Activated T-helper 1 cell treated with anti-CD3 and anti-CD28 coated beads, Interleukin-12 subunit alpha, Interleukin-12 subunit beta, Interleukin-2, Interleukin-4 antibody, amounts not matched to agents 30 ng/mL and 10 ng/mL and 1 ng/mL, durations not matched to agents 14 hours and 24 hours and 36 hours (primary cell): ENCODE measurements at regions of chr16 and their contacts with region 1.

Region 1: DNA sequence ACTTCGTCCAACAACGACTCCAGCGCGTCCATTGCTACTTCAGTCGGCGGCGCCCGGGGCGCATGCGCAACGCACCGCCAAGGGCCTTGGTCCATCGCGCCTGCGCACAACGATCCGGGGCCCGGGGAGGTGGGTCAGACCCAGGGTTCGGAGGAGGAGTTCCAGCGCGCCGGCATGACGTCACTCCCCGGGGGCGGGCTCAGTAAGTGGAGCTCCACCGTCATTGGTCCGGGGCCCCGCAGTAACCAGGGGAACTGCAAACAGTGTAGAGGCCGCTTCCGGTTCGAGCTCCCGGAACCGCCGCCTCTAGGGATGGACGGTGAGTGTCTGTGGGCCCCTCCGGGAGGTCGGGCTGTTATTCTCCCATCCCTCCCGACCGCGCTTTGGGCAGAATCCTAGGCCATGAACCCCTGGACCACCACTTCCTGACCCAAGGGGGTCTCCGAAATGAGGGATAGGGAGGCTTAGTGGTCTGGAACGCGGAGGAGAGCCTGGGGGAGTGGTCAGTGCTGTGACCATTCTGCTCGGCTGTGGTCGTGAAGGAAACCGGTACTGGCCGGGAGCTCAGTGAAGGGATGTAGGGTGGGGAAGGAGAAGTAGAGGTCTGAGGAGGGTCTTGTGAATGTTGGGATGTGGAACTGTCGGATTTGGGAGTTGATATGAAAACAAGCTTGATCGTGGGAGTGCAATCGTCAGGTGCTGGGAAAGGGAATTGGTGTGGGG is at the starts of genes GTF3C1 and KATNIP:
- DNase-seq: peak; percentile 100
- H3K4me3 Mint-ChIP-seq: peak within 1 kb of the TSS; percentile 99
- H3K27ac Mint-ChIP-seq: peak within 1 kb of the TSS; percentile 90
- H3K4me1 Mint-ChIP-seq: peaks cover 41% of the 10 kb centered on the region
- H3K27me3 Mint-ChIP-seq: no peaks in the 10 kb centered on the region
- total RNA-seq, gene GTF3C1: 66.5 and 69.9 TPM in 2 replicates
- total RNA-seq, gene KATNIP: 12.4 and 17.6 TPM in 2 replicates

Region 2: GRCh38 chr16:27264151-27264550 is 285.9 kb before region 1 on chr16:
- intact Hi-C with region 1: no loop called
- DNase-seq: no peak
- H3K4me3 Mint-ChIP-seq: no peak overlapping the region
- H3K27ac Mint-ChIP-seq: no peak overlapping the region
- H3K4me1 Mint-ChIP-seq: peaks cover 54% of the 10 kb centered on the region
- H3K27me3 Mint-ChIP-seq: no peaks in the 10 kb centered on the region

Region 3: DNA sequence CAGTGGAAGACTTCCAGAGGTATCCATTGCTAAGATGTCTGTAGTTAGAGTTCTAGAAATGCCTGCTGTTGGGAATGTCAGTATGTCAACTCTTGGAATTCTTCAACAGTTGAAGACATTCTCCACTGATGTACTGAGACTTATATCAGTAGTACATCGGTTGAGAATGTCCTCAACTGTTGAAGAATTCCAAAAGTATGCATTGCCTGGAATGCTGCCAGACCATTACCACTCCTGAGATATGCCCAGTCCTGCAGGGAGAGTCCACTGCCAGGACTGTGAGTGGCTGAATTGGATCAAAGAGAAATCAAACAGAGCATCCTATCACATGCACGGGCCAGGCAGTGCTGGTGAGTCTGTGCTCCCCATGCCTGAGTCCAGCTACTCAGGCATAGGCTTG is 106.0 kb before region 1 on chr16:
- intact Hi-C with region 1: no loop called
- DNase-seq: no peak
- H3K4me3 Mint-ChIP-seq: no peak overlapping the region
- H3K27ac Mint-ChIP-seq: no peak overlapping the region
- H3K4me1 Mint-ChIP-seq: peaks cover 45% of the 10 kb centered on the region
- H3K27me3 Mint-ChIP-seq: no peaks in the 10 kb centered on the region

Region 4: GRCh38 chr16:27566417-27566816 is 16.4 kb after region 1 on chr16:
- intact Hi-C with region 1: no loop called
- DNase-seq: no peak
- H3K4me3 Mint-ChIP-seq: no peak overlapping the region
- H3K27ac Mint-ChIP-seq: no peak overlapping the region
- H3K4me1 Mint-ChIP-seq: no peaks in the 10 kb centered on the region
- H3K27me3 Mint-ChIP-seq: no peaks in the 10 kb centered on the region

Region 5: DNA sequence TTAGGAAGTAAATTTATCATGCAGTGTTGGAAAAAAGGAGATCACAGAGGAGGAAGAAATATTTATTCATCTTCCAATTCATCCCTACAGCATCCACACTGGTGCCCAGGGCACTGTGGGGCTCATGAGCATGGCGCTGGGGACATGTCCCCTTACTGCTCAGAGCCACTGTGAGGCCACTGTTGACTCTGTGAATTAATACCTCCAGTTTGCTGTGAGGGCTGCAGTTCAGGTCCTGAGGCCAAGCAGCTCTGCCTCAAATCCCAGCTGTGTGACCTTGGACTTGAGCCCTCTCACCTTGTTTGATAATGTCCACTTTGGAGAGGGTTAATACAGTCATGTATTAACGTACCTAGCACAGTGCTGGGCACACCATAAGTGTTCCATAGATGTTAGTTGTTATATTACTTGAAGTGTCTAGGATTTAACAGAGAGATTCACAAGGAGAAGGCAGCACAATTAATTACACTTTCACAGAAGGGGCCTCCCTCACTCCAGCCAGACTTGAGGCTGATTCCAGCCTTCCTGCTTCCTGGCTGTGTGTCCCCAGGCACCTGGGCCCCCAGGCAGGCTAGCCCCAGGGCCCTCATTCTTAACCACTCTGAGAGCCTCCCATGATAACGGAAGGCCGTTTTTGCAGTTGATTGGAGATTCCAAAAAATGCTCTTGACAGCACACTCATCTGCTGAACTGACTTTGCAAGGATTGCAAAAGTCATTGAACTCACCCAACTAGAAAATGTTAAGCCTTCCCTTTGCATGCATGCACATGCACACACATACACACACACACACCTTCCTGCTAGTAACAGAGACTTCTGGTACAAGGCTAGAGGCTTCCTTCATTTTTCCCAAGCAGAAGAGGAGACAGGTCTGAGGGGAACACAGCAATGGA is 29.3 kb after region 1 on chr16:
- intact Hi-C with region 1: loop called (anchors 2 kb)
- DNase-seq: no peak
- H3K4me3 Mint-ChIP-seq: no peak overlapping the region
- H3K27ac Mint-ChIP-seq: no peak overlapping the region
- H3K4me1 Mint-ChIP-seq: peaks cover 23% of the 10 kb centered on the region
- H3K27me3 Mint-ChIP-seq: no peaks in the 10 kb centered on the region